ENCODE measurements at regions of chr13 and their contacts with region 1.

Region 1: GRCh38 chr13:99176309-99177276 is 24.1 kb upstream of the UBAC2 start:
- DNase-seq: peak; percentile 82
- CTCF ChIP-seq: peak; percentile 87

Region 2: DNA sequence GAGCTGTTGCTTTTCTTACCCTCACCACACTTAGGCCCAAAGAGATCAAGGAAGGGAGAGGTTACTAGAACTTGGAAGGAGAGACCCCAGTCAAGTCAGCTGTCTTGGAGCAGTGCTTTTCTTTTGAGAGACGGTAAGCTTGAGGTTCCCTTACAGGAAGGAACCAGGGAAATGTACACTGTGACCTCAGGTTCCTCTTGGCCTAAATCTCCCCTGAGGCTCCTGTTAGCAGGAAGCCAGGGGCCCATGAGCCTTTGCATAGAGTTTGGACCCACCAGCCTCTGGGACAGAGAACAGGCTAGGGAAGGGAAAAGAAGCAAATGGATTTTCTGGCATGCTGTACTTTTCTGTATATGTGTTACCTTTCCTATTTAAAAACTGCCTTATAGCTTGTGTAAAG is 87.5 kb after region 1 on chr13:
- in situ Hi-C with region 1: loop called (anchors 5 kb)
- DNase-seq: no peak
- CTCF ChIP-seq: no peak

Measured in GM13977 (cell line).